PC-3 (cell line): ENCODE measurements at regions of chrX and their contacts with region 1.

Region 1: DNA sequence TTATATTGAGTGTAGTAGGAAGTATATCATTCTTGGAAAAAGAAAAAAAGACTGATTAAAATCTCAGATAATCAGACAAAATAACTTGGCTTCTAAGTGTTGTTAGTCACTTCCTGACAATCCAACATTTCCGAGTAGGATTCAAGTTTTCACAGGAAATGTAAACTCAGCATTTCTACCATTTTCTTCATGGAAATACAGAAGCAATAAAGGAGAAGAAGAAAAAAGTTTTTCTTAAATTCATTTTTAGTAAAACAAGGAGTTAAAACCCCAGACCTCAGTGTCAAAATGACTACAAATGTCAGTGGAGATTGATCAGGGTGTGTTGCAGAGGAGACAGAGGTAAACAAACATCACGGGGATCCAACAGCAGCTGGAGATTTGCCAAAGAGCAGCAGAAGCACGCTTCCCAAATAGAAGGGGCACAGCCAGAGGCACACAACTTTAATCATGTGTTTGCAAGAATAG is 129.3 kb upstream of the FAM9B start:
- DNase-seq: peak; percentile 79
- ATAC-seq: peak; percentile 56
- H3K4me3 ChIP-seq: peak overlapping the region; percentile 28; the same call in 1 of the 2 replicates
- H3K27ac ChIP-seq: peak overlapping the region; percentile 98
- H3K4me1 ChIP-seq: peaks cover 55% of the 10 kb centered on the region
- H3K27me3 ChIP-seq: no peaks in the 10 kb centered on the region
- CTCF ChIP-seq: no peak

Region 2: GRCh38 chrX:8868906-8869305 is 294.3 kb before region 1 on chrX:
- CTCF ChIA-PET with region 1: interaction called, 3 read pairs
- POLR2A ChIA-PET with region 1: no interaction called
- intact Hi-C with region 1: loop called (anchors 1 kb)
- DNase-seq: peak; percentile 57
- ATAC-seq: peak; percentile 70
- H3K4me3 ChIP-seq: peak overlapping the region; percentile 57
- H3K27ac ChIP-seq: peak overlapping the region; percentile 100
- H3K4me1 ChIP-seq: peaks cover 44% of the 10 kb centered on the region
- H3K27me3 ChIP-seq: no peaks in the 10 kb centered on the region
- CTCF ChIP-seq: peak; percentile 64

Region 3: DNA sequence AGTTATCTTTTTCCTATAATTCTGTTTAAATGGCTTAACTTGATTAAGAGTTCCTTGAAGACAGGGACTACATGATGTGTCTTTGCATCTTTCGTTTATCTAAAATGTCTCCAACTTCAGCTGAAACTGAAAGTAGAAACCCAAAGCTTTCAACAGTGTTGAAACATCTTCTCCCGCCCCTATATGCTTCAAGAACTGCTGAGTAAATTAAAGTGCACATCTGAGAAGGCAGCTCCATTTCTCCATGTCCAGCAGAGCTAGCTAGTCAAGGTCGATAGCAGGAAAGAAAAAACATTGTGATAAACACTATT is 115.9 kb after region 1 on chrX:
- CTCF ChIA-PET with region 1: no interaction called
- POLR2A ChIA-PET with region 1: no interaction called
- intact Hi-C with region 1: no loop called
- DNase-seq: no peak
- ATAC-seq: no peak
- H3K4me3 ChIP-seq: no peak overlapping the region
- H3K27ac ChIP-seq: no peak overlapping the region
- H3K4me1 ChIP-seq: no peaks in the 10 kb centered on the region
- H3K27me3 ChIP-seq: no peaks in the 10 kb centered on the region
- CTCF ChIP-seq: no peak